Sciatic nerve (tissue), 2 donors: ENCODE measurements at regions of chr3 and their contacts with region 1.

Region 1: GRCh38 chr3:39637807-39638206 is 170.3 kb downstream of the MOBP start:
- DNase-seq: no peak
- ATAC-seq: no peak

Region 2: DNA sequence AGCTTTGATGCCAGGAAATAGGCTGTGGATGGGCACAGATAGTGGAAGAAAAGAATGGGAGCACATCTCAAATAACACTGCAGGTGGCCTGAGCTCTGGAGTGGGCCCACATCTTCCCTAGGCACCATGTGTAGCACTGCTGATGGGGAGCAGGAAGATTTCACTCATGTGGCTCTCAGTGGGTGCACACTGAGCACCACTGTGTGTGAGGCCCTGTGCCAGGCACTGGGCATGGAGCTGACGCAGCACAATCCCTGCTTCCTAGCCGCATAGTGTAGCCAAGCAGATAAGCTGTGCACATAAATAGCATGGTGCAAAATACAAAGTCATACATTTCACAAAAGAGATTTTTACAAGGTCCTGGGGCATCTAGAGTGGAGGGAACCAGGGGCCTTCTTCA is 68.7 kb before region 1 on chr3:
- intact Hi-C with region 1: no loop called
- DNase-seq: no peak
- ATAC-seq: no peak

Region 3: DNA sequence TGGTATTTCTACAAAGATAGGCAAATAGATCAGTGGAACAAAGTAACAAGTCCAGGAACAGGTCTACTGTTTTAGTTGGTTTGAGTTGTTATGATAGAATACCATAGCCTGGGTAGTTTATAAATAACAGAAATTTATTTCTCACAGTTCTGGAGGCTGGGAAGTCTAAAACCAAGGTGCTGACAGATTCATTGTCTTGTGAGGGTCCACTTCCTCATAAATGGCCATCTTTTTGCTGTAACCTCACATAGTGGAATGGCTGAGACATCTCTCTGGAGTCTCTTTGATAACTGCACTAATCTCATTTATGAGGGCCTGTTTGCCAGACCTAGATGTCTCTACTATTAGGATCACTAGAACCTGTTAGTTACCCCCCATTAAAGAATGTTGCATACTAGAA is 19.3 kb after region 1 on chr3:
- intact Hi-C with region 1: loop called (anchors 1 kb)
- DNase-seq: no peak
- ATAC-seq: no peak